ENCODE measurements at regions of chr2 and their contacts with region 1.

Region 1: DNA sequence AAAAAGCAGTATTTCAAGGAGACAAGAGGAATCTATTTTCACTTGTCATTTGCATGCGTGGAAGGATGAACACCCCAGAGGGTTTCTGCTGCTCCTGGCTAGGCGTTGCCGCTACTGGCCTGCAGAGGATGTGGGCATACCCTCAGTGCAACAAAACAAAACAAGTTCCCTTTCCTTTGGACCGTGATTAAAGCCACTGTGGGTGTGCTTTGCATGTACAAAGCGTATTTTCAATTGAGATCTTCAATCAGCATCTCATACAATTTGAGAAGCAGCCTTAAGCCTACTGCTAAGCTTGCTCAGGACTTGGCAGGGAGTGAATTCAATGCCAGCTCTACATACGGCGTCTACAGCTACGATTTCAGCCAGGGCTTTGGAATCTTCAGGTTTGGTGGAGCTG is 298.4 kb downstream of the LPIN1 start:
- DNase-seq: peak in 8 of 10 donors; percentile 19 to 84 (median 56)
- ATAC-seq: peak; percentile 98
- H3K4me3 Mint-ChIP-seq: peak overlapping the region; percentile 29 to 59 (median 50)
- H3K27ac Mint-ChIP-seq: peak overlapping the region in 8 of 10 donors; percentile 4 to 85 (median 64)
- H3K4me1 Mint-ChIP-seq: peaks cover 32 to 85% (median 79%) of the 10 kb centered on the region in 4 donors
- H3K27me3 Mint-ChIP-seq: peaks cover 0 to 4% (median 0%) of the 10 kb centered on the region in 5 donors

Region 2: GRCh38 chr2:12032975-12033374 is 11.9 kb before region 1 on chr2:
- POLR2A ChIA-PET with region 1: interaction called, 18 read pairs
- DNase-seq: no peak
- ATAC-seq: no peak
- H3K4me3 Mint-ChIP-seq: no peak overlapping the region
- H3K27ac Mint-ChIP-seq: peak overlapping the region in 4 of 10 donors; percentile 20 to 53 (median 36)
- H3K4me1 Mint-ChIP-seq: peaks cover 23 to 67% (median 37%) of the 10 kb centered on the region in 4 donors
- H3K27me3 Mint-ChIP-seq: no peaks in the 10 kb centered on the region

Region 3: DNA sequence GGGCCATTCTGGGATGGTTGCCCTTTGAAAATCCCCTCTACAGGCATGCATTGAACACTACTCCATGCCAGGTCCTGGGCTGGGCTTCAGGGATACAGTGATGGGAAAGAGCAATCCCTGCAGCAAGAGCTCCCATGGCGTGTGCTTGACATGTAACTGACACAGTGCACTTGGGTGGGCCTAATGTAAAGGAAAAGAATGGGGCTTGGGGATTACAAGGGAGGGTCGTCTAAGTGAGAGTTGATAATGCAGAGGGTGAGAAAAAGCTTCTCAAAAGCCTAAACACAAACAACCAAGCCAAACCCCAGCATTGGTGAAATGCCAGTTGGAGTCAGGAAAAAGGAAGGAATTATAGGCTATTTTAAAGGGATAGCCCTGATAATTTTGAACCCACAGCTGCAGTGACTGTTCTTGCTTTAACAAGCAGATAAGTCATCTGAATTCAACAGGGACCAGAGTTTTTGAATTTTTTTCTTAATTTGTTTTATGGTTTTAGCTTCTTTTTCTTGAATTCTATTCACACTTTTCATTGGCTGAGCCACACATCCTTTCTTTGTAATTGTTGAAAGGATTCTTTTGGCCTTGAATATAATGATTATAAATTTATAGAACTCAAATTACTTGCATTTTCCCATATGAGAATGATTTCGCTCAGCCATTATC is 10.2 kb after region 1 on chr2:
- POLR2A ChIA-PET with region 1: interaction called, 14 read pairs
- DNase-seq: no peak
- ATAC-seq: no peak
- H3K4me3 Mint-ChIP-seq: no peak overlapping the region
- H3K27ac Mint-ChIP-seq: no peak overlapping the region
- H3K4me1 Mint-ChIP-seq: peaks cover 17 to 72% (median 44%) of the 10 kb centered on the region in 4 donors
- H3K27me3 Mint-ChIP-seq: peaks cover 0 to 2% (median 0%) of the 10 kb centered on the region in 5 donors

Measured in naive thymus-derived CD8-positive, alpha-beta T cell (primary cell).